ENCODE measurements at regions of chr17 and their contacts with region 1.

Region 1: DNA sequence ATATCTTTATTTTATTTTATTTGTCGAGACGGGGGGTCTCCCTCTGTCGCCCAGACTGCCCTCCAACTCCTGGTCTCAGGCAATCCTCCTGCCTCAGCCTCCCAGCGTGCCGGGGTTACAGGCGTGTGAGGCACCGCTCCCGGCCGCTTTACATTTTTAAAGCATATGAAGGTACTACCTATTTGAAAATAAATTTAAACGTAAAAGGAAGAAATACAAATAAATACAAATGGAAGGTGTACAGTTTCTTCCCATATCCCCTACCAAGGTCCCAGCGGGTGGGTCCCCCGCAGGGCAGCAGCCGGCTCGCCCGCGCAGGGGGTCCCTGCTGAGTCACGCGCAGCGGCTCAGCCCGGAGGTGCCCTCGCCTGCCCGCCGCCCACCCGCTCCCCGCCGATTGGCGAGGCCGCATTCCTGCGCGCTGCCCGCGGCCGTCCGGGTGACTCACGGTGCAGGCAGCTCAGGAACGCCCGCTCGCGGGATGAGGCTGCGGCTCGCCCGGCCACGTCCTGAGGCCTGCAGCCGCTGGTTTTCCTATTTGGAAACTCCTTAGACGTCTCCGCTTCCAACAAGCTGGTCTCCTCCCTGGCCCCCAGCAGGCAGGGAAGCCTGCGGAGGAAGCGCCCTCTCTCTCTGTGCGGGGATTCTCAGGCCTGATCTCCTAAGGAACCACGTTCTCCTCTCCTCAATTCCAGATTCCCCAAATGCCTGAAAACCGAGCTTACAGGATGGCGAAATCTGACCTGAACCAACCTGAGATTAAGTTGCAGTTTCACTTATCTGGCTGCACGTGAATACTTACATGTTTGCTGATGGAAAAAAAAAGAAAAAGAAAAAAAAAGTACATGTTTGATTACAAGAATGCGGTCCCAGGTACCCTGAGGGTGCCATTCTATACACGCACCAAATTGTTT is 54.9 kb upstream of the MAP3K14 start:
- DNase-seq: peak; percentile 92
- H3K4me3 ChIP-seq: peak overlapping the region; percentile 49 to 57 (median 52)
- H3K27ac ChIP-seq: peak overlapping the region; percentile 83 to 92 (median 86)
- H3K4me1 ChIP-seq: peaks cover 33 to 38% (median 36%) of the 10 kb centered on the region in 4 donors
- H3K27me3 ChIP-seq: no peaks in the 10 kb centered on the region
- CTCF ChIP-seq: no peak
- EP300 ChIP-seq: no peak
- POLR2A ChIP-seq: no peak

Region 2: GRCh38 chr17:45092932-45093430 is 278.7 kb before region 1 on chr17:
- intact Hi-C with region 1: no loop called
- DNase-seq: peak; percentile 96
- H3K4me3 ChIP-seq: peak overlapping the region in 1 of 4 donors; percentile 29
- H3K27ac ChIP-seq: peak overlapping the region; percentile 87 to 94 (median 90)
- H3K4me1 ChIP-seq: peaks cover 38 to 99% (median 78%) of the 10 kb centered on the region in 4 donors
- H3K27me3 ChIP-seq: no peaks in the 10 kb centered on the region
- CTCF ChIP-seq: no peak
- EP300 ChIP-seq: no peak
- POLR2A ChIP-seq: no peak

Region 3: GRCh38 chr17:45320931-45321461 is 50.7 kb before region 1 on chr17:
- intact Hi-C with region 1: loop called (anchors 2 kb)
- DNase-seq: no peak
- H3K4me3 ChIP-seq: no peak overlapping the region
- H3K27ac ChIP-seq: peak overlapping the region; percentile 46 to 60 (median 50)
- H3K4me1 ChIP-seq: peaks cover 18 to 30% (median 26%) of the 10 kb centered on the region in 4 donors
- H3K27me3 ChIP-seq: no peaks in the 10 kb centered on the region
- CTCF ChIP-seq: no peak
- EP300 ChIP-seq: no peak
- POLR2A ChIP-seq: no peak